BJ (cell line): ENCODE measurements at regions of chr2 and their contacts with region 1.

Region 1: DNA sequence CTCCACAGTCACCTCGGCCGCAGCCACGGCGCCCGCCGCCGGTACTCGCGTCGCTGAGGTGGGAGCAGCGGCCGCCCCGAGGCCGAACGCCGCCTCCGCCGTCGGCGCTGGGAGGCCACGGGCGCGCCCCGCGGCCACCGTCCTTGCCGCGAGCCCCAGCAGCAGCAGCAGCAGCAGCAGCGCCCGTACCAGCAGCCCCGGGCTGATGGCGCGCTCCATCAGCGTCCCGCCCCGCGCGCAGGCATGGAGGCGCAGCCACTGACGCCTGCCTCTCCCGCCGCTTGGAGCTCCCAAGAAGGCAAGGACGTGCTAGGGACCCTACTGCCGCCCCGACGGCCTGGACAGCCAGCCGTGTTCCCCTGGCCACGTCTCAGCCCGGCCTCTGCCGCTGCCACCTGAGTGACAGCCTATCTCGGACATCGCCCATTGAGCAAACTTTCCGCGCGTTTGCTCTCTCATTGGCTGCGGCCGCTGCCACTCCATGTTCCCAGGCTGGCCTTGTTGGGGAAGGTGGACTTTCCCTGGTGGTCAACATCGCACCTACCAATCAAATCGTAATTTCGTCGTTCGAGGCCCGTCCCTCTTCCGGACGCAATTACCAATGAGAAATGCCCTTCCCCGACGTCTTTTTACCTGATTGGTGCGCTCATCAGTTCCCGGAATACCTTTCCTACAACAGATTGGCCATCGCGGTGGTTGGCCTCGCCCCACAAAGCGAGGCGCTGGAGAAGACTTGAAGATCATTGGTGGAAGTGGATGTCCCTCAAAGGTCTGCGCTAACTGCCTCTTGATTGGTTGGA is at the start of gene EIF2AK3:
- DNase-seq: peak; percentile 100
- H3K4me3 ChIP-seq: peak within 1 kb of the TSS; percentile 97
- H3K27me3 ChIP-seq: no peaks in the 10 kb centered on the region
- CTCF ChIP-seq: no peak
- polyA plus RNA-seq, gene EIF2AK3: 3.8 and 8.9 TPM in 2 replicates

Region 2: DNA sequence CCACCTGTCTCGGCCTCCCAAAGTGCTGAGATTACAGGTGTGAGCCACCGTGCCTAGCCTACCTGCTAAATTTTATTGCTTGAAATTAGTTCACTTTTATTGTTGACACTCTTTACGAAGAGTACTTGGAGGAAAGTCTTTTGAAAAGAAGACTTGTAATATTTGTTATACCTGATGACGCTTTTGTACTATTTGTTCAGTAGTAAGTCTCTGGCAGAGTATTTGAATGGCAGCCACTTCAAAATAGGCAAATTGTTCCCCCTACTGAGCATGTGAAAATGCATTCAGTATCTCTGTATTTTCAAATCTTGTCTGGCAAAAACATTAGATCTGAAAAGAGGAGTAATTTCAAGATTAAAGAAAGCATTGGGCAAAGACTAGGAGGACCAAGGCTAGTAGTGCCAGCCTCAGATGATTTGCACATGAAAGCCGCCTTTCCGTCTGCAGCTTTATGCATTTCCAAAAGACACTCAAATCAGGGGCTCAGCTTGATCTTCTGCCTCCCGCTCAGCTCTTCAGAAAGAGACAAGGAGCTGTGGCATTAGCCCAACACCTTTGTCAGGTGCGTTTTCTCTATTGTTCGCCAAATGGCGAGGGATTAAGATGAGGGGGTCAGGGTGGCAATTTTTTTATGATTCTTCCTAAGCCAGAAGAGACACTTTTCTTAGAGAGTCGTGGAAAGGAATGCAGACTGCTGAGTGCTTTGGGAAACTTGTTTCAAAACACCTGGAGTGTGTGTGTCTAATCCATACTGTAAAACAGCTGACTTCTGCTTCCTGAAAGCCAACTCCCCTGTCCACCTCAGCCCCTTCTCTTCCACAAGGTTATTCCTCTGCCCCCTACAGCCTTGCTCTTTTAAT is 155.9 kb before region 1 on chr2:
- CTCF ChIA-PET with region 1: no interaction called
- POLR2A ChIA-PET with region 1: no interaction called
- DNase-seq: no peak
- H3K4me3 ChIP-seq: no peak overlapping the region
- H3K27me3 ChIP-seq: no peaks in the 10 kb centered on the region
- CTCF ChIP-seq: no peak

Region 3: GRCh38 chr2:88606371-88607030 is 20.8 kb before region 1 on chr2:
- CTCF ChIA-PET with region 1: interaction called, 3 read pairs
- POLR2A ChIA-PET with region 1: interaction called, 17 read pairs
- DNase-seq: no peak
- H3K4me3 ChIP-seq: no peak overlapping the region
- H3K27me3 ChIP-seq: no peaks in the 10 kb centered on the region
- CTCF ChIP-seq: no peak

Region 4: GRCh38 chr2:88810017-88810416 is 182.8 kb after region 1 on chr2:
- CTCF ChIA-PET with region 1: no interaction called
- POLR2A ChIA-PET with region 1: no interaction called
- DNase-seq: no peak
- H3K4me3 ChIP-seq: no peak overlapping the region
- H3K27me3 ChIP-seq: no peaks in the 10 kb centered on the region
- CTCF ChIP-seq: no peak